ENCODE measurements at regions of chr17 and their contacts with region 1.

Region 1: DNA sequence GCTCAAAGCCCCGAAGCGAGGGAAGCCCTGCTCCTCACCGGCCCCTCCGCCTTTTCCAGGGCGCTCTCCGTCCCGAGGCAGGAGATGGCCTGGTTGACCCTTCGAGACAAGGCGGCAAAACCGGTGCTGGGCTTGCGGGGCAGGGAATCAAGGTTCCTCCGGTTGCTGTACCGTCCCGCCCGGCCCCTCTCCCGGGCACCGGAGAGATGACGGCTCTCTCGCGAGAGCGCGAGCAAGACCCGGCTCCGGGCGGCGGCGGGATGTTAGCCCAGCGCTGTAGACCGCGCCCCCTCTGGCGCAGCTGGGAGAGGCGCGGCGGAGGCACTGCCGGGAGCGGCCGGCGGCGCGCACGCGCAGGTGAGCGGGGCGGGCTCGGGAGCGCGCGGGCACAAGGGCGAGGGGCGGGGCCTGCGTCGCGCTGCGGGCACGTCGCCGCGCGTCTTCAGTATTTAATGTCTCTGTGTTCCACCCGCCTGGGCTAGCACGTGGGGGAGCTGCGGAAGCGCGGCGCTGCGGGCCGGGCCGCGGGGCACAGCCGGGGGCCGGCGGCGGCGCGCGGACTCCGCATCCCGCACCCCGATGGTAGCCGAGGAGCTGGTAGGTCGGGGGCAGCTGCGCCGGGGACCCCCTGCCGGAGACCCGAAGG is at the start of gene AKAP1:
- DNase-seq: peak; percentile 93 to 95 (median 94)
- H3K4me3 ChIP-seq: peak within 1 kb of the TSS; percentile 75 to 90 (median 79)
- H3K4me3 Mint-ChIP-seq: peak within 1 kb of the TSS; percentile 92 to 94
- H3K27ac ChIP-seq: peak within 1 kb of the TSS; percentile 92 to 97
- H3K27ac Mint-ChIP-seq: peak within 1 kb of the TSS; percentile 89 to 96 (median 94)
- H3K4me1 ChIP-seq: peaks cover 37 to 52% of the 10 kb centered on the region in 2 donors
- H3K4me1 Mint-ChIP-seq: peaks cover 48% of the 10 kb centered on the region
- H3K27me3 ChIP-seq: no peaks in the 10 kb centered on the region
- H3K27me3 Mint-ChIP-seq: peaks cover 0 to 4% (median 0%) of the 10 kb centered on the region in 3 donors
- CTCF ChIP-seq: no peak
- polyA plus RNA-seq, gene AKAP1: 5.6 to 14.6 (median 6.8) TPM

Region 2: DNA sequence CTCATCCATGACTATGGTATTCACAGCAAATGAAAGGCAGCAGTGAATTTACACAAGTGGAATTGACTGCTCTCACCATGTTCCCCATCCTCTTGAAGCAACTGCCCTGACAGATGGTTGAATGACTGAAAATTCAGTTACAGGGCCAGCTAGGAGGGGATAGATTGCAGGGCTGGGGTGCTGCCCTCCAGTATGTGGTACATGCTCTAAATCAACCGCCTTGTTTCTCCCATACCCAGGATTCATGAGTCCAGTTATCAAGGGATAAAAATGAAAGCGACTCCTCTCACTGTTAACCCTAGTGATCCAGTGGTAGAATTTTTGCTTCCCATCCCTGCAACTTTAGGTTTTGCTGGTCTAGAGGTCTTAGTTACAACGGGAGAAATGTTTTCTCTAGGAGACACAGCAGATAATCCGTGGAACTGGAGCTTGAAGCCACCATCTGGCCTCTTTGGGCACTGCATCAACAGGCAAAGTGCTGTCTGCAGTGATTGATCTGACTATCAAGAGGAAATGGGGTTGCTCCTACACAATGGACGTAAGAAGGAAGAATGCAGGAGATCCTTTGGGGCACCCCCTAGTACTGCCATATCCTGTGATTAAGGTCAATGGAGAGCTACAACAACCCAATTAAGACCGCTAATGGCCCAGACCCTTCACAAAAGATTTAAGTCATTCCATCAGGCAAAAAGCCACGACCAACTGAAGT is 75.0 kb before region 1 on chr17:
- intact Hi-C with region 1: loop called in 1 of 2 experiments (anchors 10 kb)
- DNase-seq: peak; percentile 30 to 56 (median 52)
- H3K4me3 ChIP-seq: no peak overlapping the region
- H3K4me3 Mint-ChIP-seq: peak overlapping the region in 1 of 2 donors; percentile 43
- H3K27ac ChIP-seq: no peak overlapping the region
- H3K27ac Mint-ChIP-seq: peak overlapping the region in 1 of 7 donors; percentile 1
- H3K4me1 ChIP-seq: peaks cover 15 to 17% of the 10 kb centered on the region in 2 donors
- H3K4me1 Mint-ChIP-seq: peaks cover 20% of the 10 kb centered on the region
- H3K27me3 ChIP-seq: no peaks in the 10 kb centered on the region
- H3K27me3 Mint-ChIP-seq: peaks cover 0 to 7% (median 5%) of the 10 kb centered on the region in 3 donors
- CTCF ChIP-seq: peak; percentile 86

Region 3: DNA sequence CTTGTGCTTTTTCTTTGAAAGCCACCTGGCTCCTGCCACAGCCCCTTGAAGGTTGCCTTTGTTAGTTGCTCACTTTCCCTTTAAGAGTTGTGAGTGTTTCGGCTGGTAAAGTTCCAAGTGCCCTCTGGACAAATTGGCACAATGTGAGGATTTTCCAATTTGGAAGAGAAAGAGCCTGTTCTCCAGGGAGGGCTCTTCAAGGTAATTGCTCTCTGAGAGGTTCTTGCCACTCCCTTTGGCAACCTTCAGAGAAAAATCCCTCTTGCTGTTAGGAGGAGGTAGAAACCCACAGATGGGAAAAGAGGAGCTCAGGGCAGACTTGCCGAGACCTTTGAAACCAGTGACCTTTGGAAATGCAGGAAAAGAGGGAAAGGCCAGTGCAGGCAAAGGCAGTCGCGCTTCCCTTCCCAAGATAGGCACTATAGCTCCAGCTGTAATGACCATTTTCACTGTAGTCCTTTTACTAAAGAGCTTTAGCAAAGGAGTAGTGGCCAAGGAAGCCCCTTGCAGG is 48.9 kb before region 1 on chr17:
- intact Hi-C with region 1: no loop called
- DNase-seq: no peak
- H3K4me3 ChIP-seq: no peak overlapping the region
- H3K4me3 Mint-ChIP-seq: no peak overlapping the region
- H3K27ac ChIP-seq: no peak overlapping the region
- H3K27ac Mint-ChIP-seq: peak overlapping the region in 1 of 7 donors; percentile 20
- H3K4me1 ChIP-seq: no peaks in the 10 kb centered on the region
- H3K4me1 Mint-ChIP-seq: peaks cover 2% of the 10 kb centered on the region
- H3K27me3 ChIP-seq: peaks cover 6 to 14% of the 10 kb centered on the region in 2 donors
- H3K27me3 Mint-ChIP-seq: peaks cover 17 to 44% (median 30%) of the 10 kb centered on the region in 3 donors
- CTCF ChIP-seq: no peak

Region 4: DNA sequence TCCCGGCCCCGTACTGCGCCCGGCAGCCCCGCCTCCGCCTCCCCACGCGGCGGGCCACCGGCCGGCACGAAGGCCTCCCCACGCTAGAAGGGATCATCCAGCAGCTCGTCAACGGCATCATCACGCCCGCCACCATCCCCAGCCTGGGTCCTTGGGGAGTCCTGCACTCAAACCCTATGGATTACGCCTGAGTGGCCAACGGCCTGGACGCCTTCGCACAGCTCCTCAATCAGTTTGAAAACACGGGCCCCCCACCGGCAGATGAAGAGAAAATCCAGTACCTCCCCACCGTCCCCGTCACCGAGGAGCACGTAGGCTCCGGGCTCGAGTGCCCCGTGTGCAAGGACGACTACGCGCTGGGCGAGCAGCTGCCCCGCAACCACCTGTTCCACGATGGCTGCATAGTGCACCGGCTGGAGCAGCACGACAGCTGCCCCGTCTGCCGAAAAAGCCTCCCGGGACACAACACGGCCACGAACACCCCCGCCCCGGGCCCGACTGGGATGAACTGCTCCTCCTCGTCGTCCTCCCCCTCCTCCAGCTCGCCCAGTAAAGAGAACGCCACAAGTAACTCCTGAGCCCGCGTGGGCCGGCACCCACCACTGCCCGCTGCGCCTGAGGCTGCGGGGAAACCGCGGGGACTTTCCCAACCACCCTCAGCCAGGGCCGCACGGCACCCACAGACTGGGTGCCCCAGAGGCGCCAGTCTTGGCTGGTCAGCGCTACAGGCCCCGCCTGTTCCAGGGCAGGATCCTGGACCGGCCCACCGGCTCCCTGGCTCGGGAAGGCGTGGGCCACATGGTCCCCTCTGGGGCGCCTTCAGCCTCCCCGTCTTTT is 38.8 kb before region 1 on chr17:
- intact Hi-C with region 1: loop called in 1 of 2 experiments (anchors 5 kb)
- DNase-seq: peak; percentile 27 to 72 (median 67)
- H3K4me3 ChIP-seq: peak overlapping the region; percentile 42 to 77 (median 52)
- H3K4me3 Mint-ChIP-seq: peak overlapping the region; percentile 87 to 95
- H3K27ac ChIP-seq: peak overlapping the region in 1 of 2 donors; percentile 69
- H3K27ac Mint-ChIP-seq: peak overlapping the region; percentile 71 to 92 (median 83)
- H3K4me1 ChIP-seq: peaks cover 27 to 28% of the 10 kb centered on the region in 2 donors
- H3K4me1 Mint-ChIP-seq: peaks cover 30% of the 10 kb centered on the region
- H3K27me3 ChIP-seq: peaks cover 22 to 39% of the 10 kb centered on the region in 2 donors
- H3K27me3 Mint-ChIP-seq: peaks cover 57 to 60% (median 58%) of the 10 kb centered on the region in 3 donors
- CTCF ChIP-seq: no peak

Region 5: DNA sequence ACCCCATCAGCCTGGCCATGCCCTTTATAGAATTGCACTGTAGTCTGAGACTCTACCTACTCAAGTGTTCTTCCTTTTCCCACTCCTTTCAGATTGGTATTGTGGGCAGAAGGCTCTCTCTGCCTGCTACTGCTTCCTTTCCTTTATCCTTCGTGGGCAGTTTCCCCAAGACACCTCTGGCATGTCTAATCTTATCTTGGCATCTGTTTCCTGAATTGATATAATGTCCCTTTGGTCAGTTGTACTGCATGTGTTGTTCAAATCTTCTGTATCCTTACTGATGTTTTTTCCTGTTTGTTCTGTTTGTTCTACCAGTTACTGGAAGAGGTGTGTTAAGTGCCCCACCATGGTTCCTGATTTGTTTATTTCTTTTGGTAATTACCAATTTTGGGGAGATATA is 141.9 kb after region 1 on chr17:
- intact Hi-C with region 1: no loop called
- DNase-seq: no peak
- H3K4me3 ChIP-seq: no peak overlapping the region
- H3K4me3 Mint-ChIP-seq: no peak overlapping the region
- H3K27ac ChIP-seq: no peak overlapping the region
- H3K27ac Mint-ChIP-seq: no peak overlapping the region
- H3K4me1 ChIP-seq: no peaks in the 10 kb centered on the region
- H3K4me1 Mint-ChIP-seq: no peaks in the 10 kb centered on the region
- H3K27me3 ChIP-seq: no peaks in the 10 kb centered on the region
- H3K27me3 Mint-ChIP-seq: peaks cover 2 to 9% (median 4%) of the 10 kb centered on the region in 3 donors
- CTCF ChIP-seq: no peak

Measured in CD14-positive monocyte (primary cell).